ENCODE measurements at regions of chr19 and their contacts with region 1.

Region 1: GRCh38 chr19:46487802-46488445 is 7.7 kb downstream of the PNMA8B start:
- DNase-seq: peak; percentile 63
- ATAC-seq: peak; percentile 93
- H3K4me3 ChIP-seq: peak overlapping the region; percentile 14; the same call in 1 of the 2 replicates
- H3K27ac ChIP-seq: no peak overlapping the region
- H3K4me1 ChIP-seq: no peaks in the 10 kb centered on the region
- H3K27me3 ChIP-seq: peaks cover 29% of the 10 kb centered on the region
- CTCF ChIP-seq: peak; percentile 99
- POLR2A ChIP-seq: peak; percentile 55; the same call in 1 of the 2 replicates
- RAD21 ChIP-seq: peak; percentile 99

Region 2: GRCh38 chr19:46283771-46284170 is 204.2 kb before region 1 on chr19:
- CTCF ChIA-PET with region 1: no interaction called
- POLR2A ChIA-PET with region 1: no interaction called
- dilution Hi-C with region 1: no loop called
- in situ Hi-C with region 1: loop called (anchors 10 kb)
- intact Hi-C with region 1: loop called (anchors 1 kb)
- DNase-seq: no peak
- ATAC-seq: no peak
- H3K4me3 ChIP-seq: no peak overlapping the region
- H3K27ac ChIP-seq: no peak overlapping the region
- H3K4me1 ChIP-seq: no peaks in the 10 kb centered on the region; the same call in 1 of the 2 replicates
- H3K27me3 ChIP-seq: peaks cover 8% of the 10 kb centered on the region
- CTCF ChIP-seq: no peak
- POLR2A ChIP-seq: no peak
- RAD21 ChIP-seq: no peak

Region 3: DNA sequence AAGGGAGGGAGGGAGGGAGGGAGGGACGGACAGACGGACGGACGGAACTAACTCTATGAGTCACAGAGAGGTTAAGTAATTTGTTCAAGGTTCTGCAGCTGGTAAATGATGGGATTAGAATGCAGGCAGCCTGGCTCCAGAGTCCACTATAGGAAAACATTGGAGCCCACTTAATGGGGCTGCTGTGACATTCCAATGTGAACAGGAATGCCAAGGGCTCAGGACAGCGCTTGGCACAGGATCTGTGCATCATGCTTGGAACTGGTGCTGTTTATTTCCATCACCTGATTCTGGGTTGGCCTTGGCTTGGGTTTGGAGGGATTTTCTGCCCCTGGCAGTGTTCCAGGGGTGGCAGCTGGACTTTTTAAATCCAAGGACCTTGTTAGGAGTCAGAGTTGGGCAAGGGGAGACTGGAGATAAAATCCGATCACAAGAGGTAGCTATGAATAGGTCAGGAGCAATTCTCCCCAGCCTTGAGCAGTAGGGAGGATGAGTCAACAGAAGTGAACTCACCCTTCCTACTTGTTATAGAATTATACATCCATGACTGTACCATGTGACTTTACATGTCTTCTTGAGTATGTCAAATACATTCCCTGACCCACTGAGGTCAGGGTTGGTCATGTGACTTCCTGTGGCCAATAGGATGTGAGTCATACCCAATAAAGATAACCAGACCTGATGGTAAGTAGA is 198.9 kb before region 1 on chr19:
- CTCF ChIA-PET with region 1: no interaction called
- POLR2A ChIA-PET with region 1: no interaction called
- dilution Hi-C with region 1: no loop called
- in situ Hi-C with region 1: loop called (anchors 10 kb)
- intact Hi-C with region 1: no loop called
- DNase-seq: peak; percentile 82
- ATAC-seq: peak; percentile 84
- H3K4me3 ChIP-seq: no peak overlapping the region
- H3K27ac ChIP-seq: no peak overlapping the region
- H3K4me1 ChIP-seq: no peaks in the 10 kb centered on the region; the same call in 1 of the 2 replicates
- H3K27me3 ChIP-seq: peaks cover under 1% of the 10 kb centered on the region
- CTCF ChIP-seq: no peak
- POLR2A ChIP-seq: no peak
- RAD21 ChIP-seq: no peak

Region 4: GRCh38 chr19:46392243-46392801 is 95.6 kb before region 1 on chr19:
- CTCF ChIA-PET with region 1: interaction called, 5 read pairs
- POLR2A ChIA-PET with region 1: no interaction called
- dilution Hi-C with region 1: no loop called
- in situ Hi-C with region 1: no loop called
- intact Hi-C with region 1: loop called (anchors 1 kb)
- DNase-seq: peak; percentile 63
- ATAC-seq: peak; percentile 71
- H3K4me3 ChIP-seq: no peak overlapping the region
- H3K27ac ChIP-seq: peak overlapping the region; percentile 63
- H3K4me1 ChIP-seq: peaks cover 15% of the 10 kb centered on the region
- H3K27me3 ChIP-seq: no peaks in the 10 kb centered on the region
- CTCF ChIP-seq: no peak
- POLR2A ChIP-seq: no peak
- RAD21 ChIP-seq: no peak

Region 5: DNA sequence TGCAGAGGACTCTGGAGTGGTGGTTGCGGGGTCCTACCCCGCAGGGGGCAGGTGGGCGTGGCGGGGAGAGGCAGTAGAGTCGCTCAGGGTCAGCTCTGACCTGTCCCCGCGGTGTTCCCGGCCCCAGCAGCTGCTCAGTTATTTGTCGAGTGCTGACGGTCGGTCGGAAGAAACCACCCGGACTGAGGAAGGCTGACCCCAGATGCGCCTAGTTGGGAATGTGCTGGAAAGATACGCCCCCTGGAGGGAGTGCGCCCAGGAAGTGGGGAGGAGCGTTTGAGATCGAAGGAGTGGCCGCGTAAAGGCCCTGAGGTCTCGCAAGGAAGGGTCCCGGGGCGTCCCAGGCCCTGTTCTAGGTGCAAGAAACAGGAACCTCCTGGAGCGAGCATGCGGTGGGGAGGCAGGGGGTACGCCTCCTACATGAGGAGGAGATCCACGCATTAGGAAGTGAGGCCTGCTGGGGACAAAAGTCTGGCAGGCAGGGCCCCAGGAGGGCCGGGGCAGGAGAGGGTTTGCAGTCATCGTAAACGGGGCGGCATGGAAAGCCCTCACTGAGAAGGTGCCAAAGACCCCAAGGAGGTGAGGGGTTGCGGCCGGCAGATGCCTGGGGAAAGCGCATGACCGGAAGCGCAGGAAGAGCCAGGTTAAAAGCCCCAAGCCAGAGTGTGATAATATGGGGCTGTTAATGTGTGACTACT is 83.7 kb before region 1 on chr19:
- CTCF ChIA-PET with region 1: interaction called, 13 read pairs
- POLR2A ChIA-PET with region 1: no interaction called
- dilution Hi-C with region 1: no loop called
- in situ Hi-C with region 1: loop called (anchors 5 kb)
- intact Hi-C with region 1: loop called (anchors 1 kb)
- DNase-seq: peak; percentile 31
- ATAC-seq: peak; percentile 50; the same call in 1 of the 2 replicates
- H3K4me3 ChIP-seq: no peak overlapping the region
- H3K27ac ChIP-seq: no peak overlapping the region
- H3K4me1 ChIP-seq: peaks cover 12% of the 10 kb centered on the region
- H3K27me3 ChIP-seq: peaks cover 4% of the 10 kb centered on the region; the same call in 1 of the 2 replicates
- CTCF ChIP-seq: peak; percentile 27; the same call in 1 of the 2 replicates
- POLR2A ChIP-seq: no peak
- RAD21 ChIP-seq: no peak

Region 6: GRCh38 chr19:46513461-46514236 is 25.7 kb after region 1 on chr19:
- CTCF ChIA-PET with region 1: interaction called, 6 read pairs
- POLR2A ChIA-PET with region 1: no interaction called
- dilution Hi-C with region 1: no loop called
- in situ Hi-C with region 1: no loop called
- intact Hi-C with region 1: loop called (anchors 2 kb)
- DNase-seq: peak; percentile 51
- ATAC-seq: peak; percentile 91
- H3K4me3 ChIP-seq: no peak overlapping the region
- H3K27ac ChIP-seq: no peak overlapping the region
- H3K4me1 ChIP-seq: no peaks in the 10 kb centered on the region
- H3K27me3 ChIP-seq: peaks cover 10% of the 10 kb centered on the region
- CTCF ChIP-seq: peak; percentile 84
- POLR2A ChIP-seq: no peak
- RAD21 ChIP-seq: peak; percentile 86

Measured in IMR-90 (cell line).